ENCODE measurements at regions of chr4 and their contacts with region 1.

Region 1: GRCh38 chr4:185054876-185055275 is 36.6 kb downstream of the HELT start:
- DNase-seq: no peak
- ATAC-seq: 0 out of 2 replicates have a peak, but pooled peaks have one; percentile 29
- H3K4me3 Mint-ChIP-seq: peak overlapping the region; percentile 48
- H3K27ac Mint-ChIP-seq: peak overlapping the region; percentile 88
- H3K4me1 Mint-ChIP-seq: peaks cover 52% of the 10 kb centered on the region
- H3K27me3 Mint-ChIP-seq: peaks cover 9% of the 10 kb centered on the region
- CTCF ChIP-seq: no peak

Region 2: DNA sequence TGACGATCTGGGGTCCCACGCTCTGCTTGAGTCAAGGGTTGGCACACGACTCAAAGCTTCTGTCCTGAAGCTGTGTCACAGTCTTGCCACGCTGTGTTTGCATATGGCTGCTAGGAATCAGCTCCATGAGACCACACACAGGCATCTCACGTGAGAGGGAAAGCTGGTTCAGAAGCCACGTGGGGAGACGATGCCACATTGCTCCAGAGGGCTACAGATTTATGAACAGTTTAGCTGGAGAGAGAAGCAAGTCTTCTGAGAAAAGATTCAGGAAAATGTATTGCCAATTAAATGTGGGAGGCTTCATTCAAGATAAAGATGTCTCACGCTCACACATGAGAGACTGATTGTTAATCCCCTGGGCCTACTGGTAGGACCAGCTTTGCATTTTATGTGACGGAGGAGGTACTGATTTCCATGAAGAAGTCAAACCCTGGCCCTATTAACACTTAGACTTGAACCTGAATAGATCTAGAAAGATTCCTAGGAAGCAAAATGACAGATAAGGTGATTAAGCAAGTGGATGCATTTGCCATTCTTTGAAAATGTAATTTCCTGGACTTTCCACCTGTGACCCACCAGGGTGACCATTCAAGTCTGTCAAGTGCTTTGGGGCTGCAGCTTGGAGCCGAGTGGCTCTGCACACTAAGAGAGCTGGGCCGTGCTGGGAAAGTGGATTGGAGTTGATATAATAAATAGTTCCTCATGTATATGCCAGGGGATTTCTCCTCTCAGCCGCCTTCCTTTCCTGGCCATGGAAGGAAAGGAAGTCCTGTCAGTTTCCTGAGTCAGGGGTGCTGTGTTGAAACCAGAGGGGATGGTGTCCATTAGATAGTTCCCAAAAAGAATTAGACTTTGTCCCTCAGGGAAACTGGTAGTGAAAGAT is 866.2 kb before region 1 on chr4:
- CTCF ChIA-PET with region 1: no interaction called
- POLR2A ChIA-PET with region 1: no interaction called
- DNase-seq: no peak
- ATAC-seq: no peak
- H3K4me3 Mint-ChIP-seq: no peak overlapping the region
- H3K27ac Mint-ChIP-seq: no peak overlapping the region
- H3K4me1 Mint-ChIP-seq: peaks cover 1% of the 10 kb centered on the region
- H3K27me3 Mint-ChIP-seq: no peaks in the 10 kb centered on the region
- CTCF ChIP-seq: no peak

Region 3: DNA sequence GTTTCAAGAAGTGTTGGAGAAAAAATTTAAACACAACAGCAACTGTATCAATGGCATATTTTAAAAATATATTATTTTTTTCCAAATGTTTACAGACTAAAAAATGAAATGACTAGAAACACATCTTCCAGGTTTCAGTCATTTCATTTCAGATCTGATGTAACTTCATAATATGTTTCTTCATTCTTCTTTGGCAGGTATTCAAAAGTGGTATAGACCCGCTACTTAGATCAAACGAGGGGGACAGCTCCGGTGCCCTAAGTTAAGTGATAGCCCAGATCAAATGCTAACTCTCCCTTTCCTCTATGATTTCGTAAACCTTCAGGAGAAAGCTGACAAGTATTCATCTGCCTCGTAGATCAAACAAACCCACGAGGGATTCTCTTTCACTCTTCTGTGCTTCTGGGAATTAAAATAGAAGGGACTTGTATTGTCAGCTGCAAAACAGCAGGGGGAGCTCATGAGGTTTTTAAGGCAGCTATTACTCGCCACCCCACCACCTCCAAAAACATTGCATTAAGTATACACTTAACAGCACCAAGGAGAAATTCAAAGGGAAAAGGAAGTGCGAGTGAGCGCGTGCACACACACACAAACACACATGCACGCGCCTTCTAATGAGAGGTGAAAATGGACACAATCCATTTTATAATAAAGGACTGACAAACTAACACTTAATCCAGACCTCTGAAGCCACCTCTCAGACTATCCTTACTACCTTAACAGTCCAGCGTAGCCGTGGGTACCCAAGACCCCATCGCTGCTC is 15.2 kb before region 1 on chr4:
- CTCF ChIA-PET with region 1: interaction called, 11 read pairs
- POLR2A ChIA-PET with region 1: no interaction called
- DNase-seq: no peak
- ATAC-seq: peak; percentile 84
- H3K4me3 Mint-ChIP-seq: no peak overlapping the region
- H3K27ac Mint-ChIP-seq: no peak overlapping the region
- H3K4me1 Mint-ChIP-seq: peaks cover 16% of the 10 kb centered on the region
- H3K27me3 Mint-ChIP-seq: peaks cover 8% of the 10 kb centered on the region
- CTCF ChIP-seq: peak; percentile 72

Measured in WTC11 (cell line).